Astrocyte of the cerebellum (primary cell): ENCODE measurements at regions of chr5 and their contacts with region 1.

Region 1: DNA sequence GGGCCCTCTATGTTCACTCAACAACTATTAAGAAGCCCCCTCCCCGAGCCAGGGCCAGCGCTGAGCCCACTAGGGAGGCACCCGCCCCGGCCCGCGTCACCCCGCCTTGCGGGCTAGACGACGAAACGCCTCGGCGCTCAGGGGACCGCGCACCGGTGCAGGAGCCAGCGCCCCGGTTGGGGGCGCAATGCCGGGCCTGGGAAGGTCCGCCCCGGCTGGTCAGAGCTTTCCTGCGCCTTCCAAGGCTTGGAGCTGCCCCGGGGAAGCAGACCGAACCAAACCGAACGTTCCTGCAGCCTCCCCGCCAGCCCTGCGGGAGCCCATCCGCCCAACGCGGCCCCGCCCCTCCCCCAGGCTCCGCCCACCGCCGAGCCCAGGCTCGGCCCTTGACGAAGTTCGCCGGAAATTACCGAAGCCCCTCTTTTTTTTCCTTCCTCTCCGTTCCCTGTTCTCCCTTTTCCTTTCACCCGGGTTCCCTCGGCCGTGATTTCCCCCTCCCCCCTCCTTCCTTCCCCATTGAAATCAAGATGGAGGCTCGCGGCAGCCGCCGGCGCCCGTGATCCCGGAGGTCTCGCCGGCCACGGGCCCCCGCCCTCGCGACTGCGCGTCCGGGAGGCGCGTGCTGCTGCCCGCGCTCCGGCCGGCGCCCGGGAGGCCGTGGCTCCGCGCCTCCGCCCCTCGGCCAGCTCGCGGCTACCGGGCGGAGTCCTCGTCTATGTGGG is at the start of gene TRIO:
- DNase-seq: peak; percentile 90
- H3K4me3 ChIP-seq: peak within 1 kb of the TSS; percentile 83
- CTCF ChIP-seq: peak; percentile 61

Region 2: GRCh38 chr5:14054111-14054854 is 88.7 kb before region 1 on chr5:
- in situ Hi-C with region 1: no loop called
- DNase-seq: no peak
- H3K4me3 ChIP-seq: no peak overlapping the region
- CTCF ChIP-seq: no peak

Region 3: DNA sequence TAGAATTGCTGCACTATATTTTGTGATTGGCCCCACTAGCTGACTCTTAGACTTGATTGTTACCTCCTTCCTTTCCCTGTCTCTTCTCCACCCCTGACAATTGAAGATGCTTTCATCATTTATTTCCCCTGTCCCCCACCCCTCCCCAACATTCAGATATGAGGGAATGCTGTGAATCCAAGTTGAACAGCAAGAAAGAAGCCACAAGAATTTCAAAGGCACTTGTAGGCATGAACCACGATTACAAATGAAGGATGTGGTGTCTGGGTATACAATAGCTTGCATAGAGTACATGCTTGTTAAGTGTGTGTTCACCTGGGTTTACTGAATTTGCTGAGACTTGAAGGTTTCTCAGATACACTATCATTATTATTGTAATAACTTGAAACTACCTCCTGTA is 78.1 kb before region 1 on chr5:
- in situ Hi-C with region 1: no loop called
- DNase-seq: peak; percentile 38
- H3K4me3 ChIP-seq: no peak overlapping the region
- CTCF ChIP-seq: no peak

Region 4: GRCh38 chr5:14190194-14191164 is 47.5 kb after region 1 on chr5:
- in situ Hi-C with region 1: loop called (anchors 10 kb)
- DNase-seq: peak; percentile 90
- H3K4me3 ChIP-seq: peak overlapping the region; percentile 11
- CTCF ChIP-seq: no peak

Region 5: DNA sequence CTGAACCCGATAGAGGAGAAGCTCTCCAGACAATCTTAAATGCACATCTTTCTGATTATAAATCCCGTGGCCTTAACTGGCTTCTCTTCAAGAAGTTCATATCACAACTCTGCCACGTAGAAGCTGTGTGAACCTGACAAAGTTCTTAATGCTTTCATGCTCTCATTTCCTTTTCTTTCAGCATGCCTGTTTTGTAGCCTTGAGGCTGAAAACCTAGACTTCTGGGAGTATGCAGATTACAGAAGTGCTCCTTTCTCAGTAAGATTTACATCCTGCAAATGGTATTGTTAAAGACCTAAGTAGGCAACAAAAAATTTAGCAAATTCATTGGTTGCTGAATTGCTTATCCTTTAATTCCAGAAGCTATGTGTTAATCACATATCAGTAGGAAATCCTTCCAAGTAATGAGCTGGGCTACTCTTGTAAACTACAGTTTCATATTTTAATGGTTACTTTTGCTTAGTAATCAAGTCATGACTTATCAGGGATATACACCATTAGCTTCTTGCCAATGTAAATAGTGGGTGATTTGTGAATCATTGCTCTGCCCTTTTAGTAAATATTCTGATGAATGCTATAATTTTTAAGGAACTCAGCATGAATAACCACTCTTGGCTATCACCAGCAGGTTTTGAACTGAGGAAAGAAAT is 1691.7 kb after region 1 on chr5:
- in situ Hi-C with region 1: no loop called
- DNase-seq: peak; percentile 76
- H3K4me3 ChIP-seq: no peak overlapping the region
- CTCF ChIP-seq: no peak